ENCODE measurements at regions of chr9 and their contacts with region 1.

Region 1: GRCh38 chr9:135410831-135411473 is 68.6 kb upstream of the PPP1R26 start:
- DNase-seq: no peak
- H3K4me3 ChIP-seq: no peak overlapping the region
- H3K27ac ChIP-seq: no peak overlapping the region
- H3K4me1 ChIP-seq: no peaks in the 10 kb centered on the region
- H3K27me3 ChIP-seq: no peaks in the 10 kb centered on the region
- CTCF ChIP-seq: no peak
- POLR2A ChIP-seq: no peak

Region 2: GRCh38 chr9:135085830-135086546 is 325.0 kb before region 1 on chr9:
- CTCF ChIA-PET with region 1: interaction called, 39 read pairs
- POLR2A ChIA-PET with region 1: no interaction called
- dilution Hi-C with region 1: no loop called
- intact Hi-C with region 1: loop called (anchors 1 kb)
- DNase-seq: peak; percentile 72
- H3K4me3 ChIP-seq: no peak overlapping the region
- H3K27ac ChIP-seq: no peak overlapping the region
- H3K4me1 ChIP-seq: no peaks in the 10 kb centered on the region
- H3K27me3 ChIP-seq: peaks cover 15% of the 10 kb centered on the region in 2 experiments
- CTCF ChIP-seq: peak; percentile 89 to 90
- POLR2A ChIP-seq: no peak

Region 3: GRCh38 chr9:135329571-135330306 is 81.2 kb before region 1 on chr9:
- CTCF ChIA-PET with region 1: no interaction called
- POLR2A ChIA-PET with region 1: no interaction called
- dilution Hi-C with region 1: no loop called
- intact Hi-C with region 1: no loop called
- DNase-seq: no peak
- H3K4me3 ChIP-seq: no peak overlapping the region
- H3K27ac ChIP-seq: no peak overlapping the region
- H3K4me1 ChIP-seq: no peaks in the 10 kb centered on the region
- H3K27me3 ChIP-seq: no peaks in the 10 kb centered on the region
- CTCF ChIP-seq: no peak
- POLR2A ChIP-seq: no peak

Region 4: DNA sequence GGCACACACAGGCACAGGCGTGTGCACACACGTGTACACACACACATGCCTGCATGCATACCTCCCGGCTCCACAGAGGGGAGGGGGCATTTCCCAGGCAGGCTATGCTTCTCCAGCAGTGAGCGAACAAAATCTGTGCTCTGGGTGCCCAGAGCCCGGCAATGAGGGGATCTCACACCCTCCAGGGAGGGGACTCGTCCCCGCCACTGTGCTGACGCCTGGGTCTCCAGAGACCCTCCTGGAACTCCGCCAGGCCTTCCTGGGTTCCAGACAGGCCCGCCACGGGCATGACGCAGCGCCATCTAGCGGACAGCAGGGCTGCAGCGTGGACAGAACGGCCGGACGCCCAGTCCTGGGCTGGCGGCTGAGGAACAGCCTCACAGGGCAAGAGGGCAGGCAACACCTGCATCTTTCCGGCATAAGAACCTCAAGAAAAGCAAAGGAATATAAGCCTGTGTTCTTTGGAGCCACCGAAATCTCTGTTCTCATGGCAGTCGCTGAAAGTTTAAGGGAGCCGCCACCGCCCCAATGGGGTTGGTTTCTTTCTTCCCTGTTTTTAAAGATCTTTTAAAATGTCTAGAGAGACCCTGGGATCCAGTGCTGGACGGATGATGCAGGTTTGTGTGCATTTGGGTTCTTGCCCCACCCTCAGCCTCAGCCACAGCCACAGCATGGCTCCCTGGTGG is 67.0 kb before region 1 on chr9:
- CTCF ChIA-PET with region 1: no interaction called
- POLR2A ChIA-PET with region 1: no interaction called
- dilution Hi-C with region 1: no loop called
- intact Hi-C with region 1: loop called (anchors 1 kb)
- DNase-seq: peak; percentile 11
- H3K4me3 ChIP-seq: no peak overlapping the region
- H3K27ac ChIP-seq: no peak overlapping the region
- H3K4me1 ChIP-seq: no peaks in the 10 kb centered on the region
- H3K27me3 ChIP-seq: no peaks in the 10 kb centered on the region
- CTCF ChIP-seq: peak; percentile 79 to 85
- POLR2A ChIP-seq: no peak